ENCODE measurements at regions of chr17 and their contacts with region 1.

Region 1: DNA sequence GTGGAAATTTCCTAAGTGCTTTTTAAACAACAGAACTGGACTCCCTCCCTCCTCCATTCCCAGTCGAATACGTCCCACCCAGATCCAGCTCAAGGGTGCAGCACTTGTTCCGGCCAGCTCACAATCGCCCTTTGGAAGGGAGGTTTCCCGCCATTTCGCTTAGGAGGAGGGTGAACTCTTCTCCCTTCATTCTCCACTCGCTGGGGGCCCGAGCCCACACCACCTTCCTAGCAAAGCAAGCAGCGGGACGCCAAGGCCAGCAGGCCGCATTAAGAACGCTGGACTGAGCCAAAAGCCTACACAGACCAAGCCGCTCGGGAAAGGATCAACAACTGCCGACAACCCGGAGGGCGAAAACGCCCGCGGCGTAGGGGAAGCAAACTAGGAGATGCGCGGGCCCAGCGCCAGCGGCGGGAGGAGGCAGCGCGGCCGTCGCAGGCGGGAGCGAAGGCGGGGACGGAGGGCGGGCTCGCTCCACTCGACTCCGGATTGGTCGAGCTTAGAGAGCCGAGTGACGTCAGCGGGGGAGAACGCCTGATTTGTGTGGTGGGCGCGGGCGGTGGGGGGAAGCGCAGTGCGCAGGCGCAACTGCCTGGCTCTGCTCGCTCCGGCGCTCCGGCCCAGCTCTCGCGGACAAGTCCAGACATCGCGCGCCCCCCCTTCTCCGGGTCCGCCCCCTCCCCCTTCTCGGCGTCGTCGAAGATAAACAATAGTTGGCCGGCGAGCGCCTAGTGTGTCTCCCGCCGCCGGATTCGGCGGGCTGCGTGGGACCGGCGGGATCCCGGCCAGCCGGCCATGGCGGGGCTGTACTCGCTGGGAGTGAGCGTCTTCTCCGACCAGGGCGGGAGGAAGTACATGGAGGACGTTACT is at the start of gene PPM1D:
- DNase-seq: peak; percentile 99 to 100
- ATAC-seq: peak; percentile 84 to 92
- H3K4me3 ChIP-seq: peak within 1 kb of the TSS; percentile 88
- H3K27ac ChIP-seq: peak within 1 kb of the TSS; percentile 86 to 89
- H3K4me1 ChIP-seq: peaks cover 24% of the 10 kb centered on the region
- CTCF ChIP-seq: no peak
- EP300 ChIP-seq: no peak
- POLR2A ChIP-seq: peak; percentile 78
- RAD21 ChIP-seq: peak in 1 of 2 experiments; percentile 14; a peak in 1 of 5 replicates
- polyA plus RNA-seq, gene PPM1D: 10.5 and 11.6 TPM in 2 replicates

Region 2: GRCh38 chr17:60525685-60526514 is 74.0 kb before region 1 on chr17 and contains the start of gene APPBP2:
- CTCF ChIA-PET with region 1: interaction called, 4 read pairs
- POLR2A ChIA-PET with region 1: interaction called, 15 read pairs
- DNase-seq: peak; percentile 87 to 93
- ATAC-seq: peak; percentile 97 to 98
- H3K4me3 ChIP-seq: peak within 1 kb of the TSS; percentile 90
- H3K27ac ChIP-seq: peak within 1 kb of the TSS; percentile 91 to 93
- H3K4me1 ChIP-seq: peaks cover 18% of the 10 kb centered on the region; the same call in 2 of the 3 replicates
- CTCF ChIP-seq: no peak
- EP300 ChIP-seq: no peak
- POLR2A ChIP-seq: peak; percentile 96
- RAD21 ChIP-seq: no peak; a peak in 1 of 5 replicates
- polyA plus RNA-seq, gene APPBP2: 22.5 and 31.6 TPM in 2 replicates

Region 3: GRCh38 chr17:60577147-60577915 is 22.5 kb before region 1 on chr17:
- CTCF ChIA-PET with region 1: interaction called, 22 read pairs
- POLR2A ChIA-PET with region 1: interaction called, 6 read pairs
- DNase-seq: no peak
- ATAC-seq: peak; percentile 89 to 92; a peak in 5 of 6 replicates
- H3K4me3 ChIP-seq: no peak overlapping the region
- H3K27ac ChIP-seq: 0 out of 6 replicates have a peak overlapping the region, but pooled peaks of 1 of the 2 experiments have one; percentile 17
- H3K4me1 ChIP-seq: no peaks in the 10 kb centered on the region
- CTCF ChIP-seq: peak; percentile 40; the same call in 2 of the 3 replicates
- EP300 ChIP-seq: no peak
- POLR2A ChIP-seq: no peak
- RAD21 ChIP-seq: peak in 1 of 2 experiments; percentile 52; a peak in 3 of 5 replicates

Region 4: DNA sequence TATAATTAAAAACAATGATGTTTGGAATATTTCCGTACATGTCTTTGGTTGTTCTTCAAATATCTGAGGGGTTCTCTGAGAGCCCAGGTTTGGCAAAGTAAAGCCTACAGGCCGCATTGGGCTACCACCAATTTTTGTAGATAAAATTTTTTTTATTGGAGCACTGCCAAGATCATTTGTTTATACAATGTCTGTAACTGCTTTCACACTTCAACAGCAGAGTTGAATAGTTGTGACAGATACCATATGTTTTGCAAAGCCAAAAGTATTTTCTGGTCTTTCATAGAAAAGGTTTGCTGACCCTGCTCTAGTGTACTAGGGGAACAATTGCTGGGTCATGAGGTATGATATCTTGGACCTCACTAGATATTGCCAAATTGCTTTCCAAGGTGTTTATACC is 10.6 kb after region 1 on chr17:
- CTCF ChIA-PET with region 1: interaction called, 18 read pairs
- POLR2A ChIA-PET with region 1: interaction called, 3 read pairs
- DNase-seq: no peak
- ATAC-seq: no peak
- H3K4me3 ChIP-seq: no peak overlapping the region
- H3K27ac ChIP-seq: no peak overlapping the region
- H3K4me1 ChIP-seq: peaks cover 24% of the 10 kb centered on the region
- CTCF ChIP-seq: no peak
- EP300 ChIP-seq: no peak
- POLR2A ChIP-seq: no peak
- RAD21 ChIP-seq: no peak

Region 5: DNA sequence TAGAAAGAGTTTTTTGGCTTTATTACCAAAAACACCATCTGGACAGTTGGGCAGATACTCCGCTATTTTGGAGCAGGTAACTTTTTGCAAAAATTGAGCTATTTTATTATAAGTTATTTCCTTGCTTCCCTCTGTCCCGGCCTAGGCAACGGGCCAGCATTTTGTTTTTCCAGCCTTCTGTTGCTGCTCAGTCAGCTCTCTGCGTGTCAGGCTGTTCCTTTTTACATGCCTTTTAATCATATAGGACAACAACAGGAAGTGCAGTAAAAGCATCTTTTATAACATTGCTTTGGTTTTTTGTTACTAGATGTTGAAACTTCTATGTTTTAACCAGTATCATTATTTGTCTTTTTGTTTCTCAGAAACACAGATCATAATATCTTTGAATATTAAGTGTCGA is 30.5 kb after region 1 on chr17:
- CTCF ChIA-PET with region 1: interaction called, 11 read pairs
- POLR2A ChIA-PET with region 1: interaction called, 4 read pairs
- DNase-seq: no peak
- ATAC-seq: no peak
- H3K4me3 ChIP-seq: no peak overlapping the region
- H3K27ac ChIP-seq: no peak overlapping the region
- H3K4me1 ChIP-seq: peaks cover 7% of the 10 kb centered on the region; the same call in 2 of the 3 replicates
- CTCF ChIP-seq: no peak
- EP300 ChIP-seq: no peak
- POLR2A ChIP-seq: no peak
- RAD21 ChIP-seq: no peak

Measured in A549 (cell line).